ENCODE measurements at regions of chr17 and their contacts with region 1.

Region 1: GRCh38 chr17:78873519-78874340 is 29.3 kb downstream of the CEP295NL start:
- DNase-seq: peak; percentile 51 to 64
- ATAC-seq: peak; percentile 83 to 92
- H3K4me3 ChIP-seq: no peak overlapping the region
- H3K27ac ChIP-seq: peak overlapping the region; percentile 32 to 72 (median 61)
- H3K4me1 ChIP-seq: peaks cover 29 to 38% of the 10 kb centered on the region in 2 donors
- H3K27me3 ChIP-seq: no peaks in the 10 kb centered on the region
- CTCF ChIP-seq: no peak
- POLR2A ChIP-seq: no peak

Region 2: GRCh38 chr17:78716814-78717393 is 156.8 kb before region 1 on chr17:
- in situ Hi-C with region 1: no loop called
- intact Hi-C with region 1: no loop called
- DNase-seq: peak; percentile 81 to 90
- ATAC-seq: peak; percentile 86 to 91
- H3K4me3 ChIP-seq: peak overlapping the region; percentile 51 to 64 (median 59)
- H3K27ac ChIP-seq: peak overlapping the region; percentile 72 to 84 (median 83)
- H3K4me1 ChIP-seq: peaks cover 47 to 50% of the 10 kb centered on the region in 2 donors
- H3K27me3 ChIP-seq: no peaks in the 10 kb centered on the region
- CTCF ChIP-seq: peak in 3 of 5 experiments; percentile 3 to 40 (median 30)
- POLR2A ChIP-seq: no peak

Region 3: GRCh38 chr17:78781948-78782916 is 91.5 kb before region 1 on chr17 and contains the start of gene CYTH1:
- in situ Hi-C with region 1: no loop called
- intact Hi-C with region 1: no loop called
- DNase-seq: peak; percentile 94 to 97
- ATAC-seq: peak; percentile 69 to 82
- H3K4me3 ChIP-seq: peak within 1 kb of the TSS; percentile 61 to 98 (median 90)
- H3K27ac ChIP-seq: peak within 1 kb of the TSS; percentile 86 to 99 (median 98)
- H3K4me1 ChIP-seq: peaks cover 24 to 27% of the 10 kb centered on the region in 2 donors
- H3K27me3 ChIP-seq: no peaks in the 10 kb centered on the region
- CTCF ChIP-seq: no peak
- POLR2A ChIP-seq: peak; percentile 82 to 90
- total RNA-seq, gene CYTH1: 24.7 to 43.7 (median 32.4) TPM

Region 4: DNA sequence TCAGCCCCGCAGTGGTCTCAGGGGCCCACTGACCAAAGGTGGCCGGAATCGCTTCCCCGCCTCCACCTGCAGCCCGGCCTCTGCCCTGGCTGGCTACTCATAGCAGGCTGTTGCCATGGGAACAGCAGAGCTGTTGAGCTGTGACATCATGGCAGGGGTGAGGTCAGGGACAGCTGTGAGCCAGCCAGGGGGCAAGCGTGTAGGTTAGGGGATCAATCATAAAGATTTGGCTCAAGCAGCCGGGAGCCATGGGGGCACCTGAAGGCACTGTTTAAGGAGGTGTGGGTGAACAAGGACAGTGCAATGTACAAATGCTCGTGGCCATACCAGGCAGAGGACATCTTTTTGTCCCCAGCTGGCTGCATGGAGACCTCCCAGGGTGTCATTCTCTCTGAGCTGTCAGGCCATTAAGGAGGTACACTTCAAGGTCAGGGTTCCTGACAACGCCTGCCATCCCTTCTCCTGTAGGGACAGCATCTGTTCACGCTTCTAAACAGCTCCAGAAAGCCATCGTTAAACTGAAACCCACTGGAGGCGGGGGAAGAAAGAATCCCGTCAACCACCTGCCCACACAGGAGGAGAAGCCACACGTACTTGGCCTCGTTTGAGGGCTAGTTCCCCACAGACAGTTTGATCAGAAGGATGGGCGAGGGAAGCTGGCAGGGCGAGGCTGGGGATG is 29.5 kb after region 1 on chr17 and contains the start of gene CEP295NL:
- in situ Hi-C with region 1: no loop called
- intact Hi-C with region 1: no loop called
- DNase-seq: no peak
- ATAC-seq: no peak
- H3K4me3 ChIP-seq: no peak within 1 kb of the TSS
- H3K27ac ChIP-seq: no peak within 1 kb of the TSS
- H3K4me1 ChIP-seq: peaks cover 8 to 13% of the 10 kb centered on the region in 2 donors
- H3K27me3 ChIP-seq: no peaks in the 10 kb centered on the region
- CTCF ChIP-seq: no peak
- POLR2A ChIP-seq: no peak
- total RNA-seq, gene CEP295NL: 0.16 TPM in 1 of 4 donors, not detected in the others

Region 5: DNA sequence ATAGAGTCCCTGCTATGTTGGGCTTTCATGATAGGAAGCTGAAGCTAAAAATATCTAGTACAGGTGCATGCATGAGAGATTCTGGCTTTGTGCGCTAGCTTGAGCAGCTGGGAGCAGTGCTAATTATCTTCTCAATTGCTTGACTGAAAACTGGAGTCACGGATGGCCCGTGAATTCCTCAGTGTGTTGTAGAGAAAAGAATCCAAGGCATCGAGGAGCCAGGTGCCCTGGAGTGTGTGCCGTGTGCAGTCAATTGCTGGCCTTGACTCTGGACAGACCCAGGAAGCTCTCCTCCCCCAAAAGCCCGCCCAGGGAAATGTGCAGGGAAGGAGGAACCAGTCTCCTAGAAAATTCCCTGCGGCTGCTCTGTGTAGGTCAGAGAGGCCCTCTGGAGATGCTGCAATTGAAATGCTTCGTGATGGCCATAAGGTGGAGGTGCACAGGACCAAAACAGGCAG is 91.8 kb after region 1 on chr17:
- in situ Hi-C with region 1: loop called in 3 of 4 experiments (anchors 5 kb)
- intact Hi-C with region 1: no loop called
- DNase-seq: no peak
- ATAC-seq: no peak
- H3K4me3 ChIP-seq: no peak overlapping the region
- H3K27ac ChIP-seq: no peak overlapping the region
- H3K4me1 ChIP-seq: no peaks in the 10 kb centered on the region
- H3K27me3 ChIP-seq: no peaks in the 10 kb centered on the region
- CTCF ChIP-seq: no peak
- POLR2A ChIP-seq: no peak